Heart right ventricle (tissue), 16 donors: ENCODE measurements at regions of chr9 and their contacts with region 1.

Region 1: GRCh38 chr9:68493958-68494577 is 46.6 kb downstream of the TMEM252 start:
- DNase-seq: no peak
- ATAC-seq: peak in 4 of 8 donors; percentile 23 to 62 (median 48)
- H3K4me3 ChIP-seq: no peak overlapping the region
- H3K27ac ChIP-seq: peak overlapping the region in 5 of 10 donors; percentile 22 to 72 (median 60)
- H3K4me1 ChIP-seq: peaks cover 0 to 67% (median 35%) of the 10 kb centered on the region in 9 donors
- H3K27me3 ChIP-seq: no peaks in the 10 kb centered on the region
- CTCF ChIP-seq: no peak

Region 2: GRCh38 chr9:68437785-68438184 is 56.3 kb before region 1 on chr9:
- intact Hi-C with region 1: loop called in 2 of 10 experiments (anchors 5 to 10 kb)
- DNase-seq: peak; percentile 52 to 82
- ATAC-seq: peak; percentile 88 to 98 (median 96)
- H3K4me3 ChIP-seq: no peak overlapping the region
- H3K27ac ChIP-seq: peak overlapping the region in 6 of 10 donors; percentile 16 to 66 (median 53)
- H3K4me1 ChIP-seq: peaks cover 5 to 32% (median 23%) of the 10 kb centered on the region in 9 donors
- H3K27me3 ChIP-seq: no peaks in the 10 kb centered on the region
- CTCF ChIP-seq: no peak

Region 3: GRCh38 chr9:68443624-68444023 is 50.4 kb before region 1 on chr9:
- intact Hi-C with region 1: loop called in 2 of 10 experiments (anchors 5 to 10 kb)
- DNase-seq: no peak
- ATAC-seq: no peak
- H3K4me3 ChIP-seq: no peak overlapping the region
- H3K27ac ChIP-seq: no peak overlapping the region
- H3K4me1 ChIP-seq: peaks cover 5 to 34% (median 17%) of the 10 kb centered on the region in 9 donors
- H3K27me3 ChIP-seq: no peaks in the 10 kb centered on the region
- CTCF ChIP-seq: no peak

Region 4: GRCh38 chr9:68462105-68462775 is 31.8 kb before region 1 on chr9:
- intact Hi-C with region 1: loop called in 1 of 10 experiments (anchors 5 kb)
- DNase-seq: peak in 1 of 2 donors; percentile 26
- ATAC-seq: peak; percentile 54 to 85 (median 76)
- H3K4me3 ChIP-seq: no peak overlapping the region
- H3K27ac ChIP-seq: peak overlapping the region in 8 of 10 donors; percentile 0 to 72 (median 42)
- H3K4me1 ChIP-seq: peaks cover 0 to 68% (median 32%) of the 10 kb centered on the region in 9 donors
- H3K27me3 ChIP-seq: no peaks in the 10 kb centered on the region
- CTCF ChIP-seq: no peak